ENCODE measurements at regions of chr12 and their contacts with region 1.

Region 1: GRCh38 chr12:13661005-13661887 is 320.2 kb downstream of the GRIN2B start:
- DNase-seq: no peak
- H3K4me3 ChIP-seq: no peak overlapping the region
- CTCF ChIP-seq: peak; percentile 79

Region 2: GRCh38 chr12:13278249-13278787 is 382.9 kb before region 1 on chr12:
- CTCF ChIA-PET with region 1: interaction called, 18 read pairs
- POLR2A ChIA-PET with region 1: no interaction called
- DNase-seq: no peak
- H3K4me3 ChIP-seq: no peak overlapping the region
- CTCF ChIP-seq: peak; percentile 96

Region 3: GRCh38 chr12:13362260-13362841 is 298.9 kb before region 1 on chr12:
- CTCF ChIA-PET with region 1: interaction called, 11 read pairs
- POLR2A ChIA-PET with region 1: no interaction called
- DNase-seq: no peak
- H3K4me3 ChIP-seq: no peak overlapping the region
- CTCF ChIP-seq: peak; percentile 80